HEK293 (cell line): ENCODE measurements at regions of chrX and their contacts with region 1.

Region 1: DNA sequence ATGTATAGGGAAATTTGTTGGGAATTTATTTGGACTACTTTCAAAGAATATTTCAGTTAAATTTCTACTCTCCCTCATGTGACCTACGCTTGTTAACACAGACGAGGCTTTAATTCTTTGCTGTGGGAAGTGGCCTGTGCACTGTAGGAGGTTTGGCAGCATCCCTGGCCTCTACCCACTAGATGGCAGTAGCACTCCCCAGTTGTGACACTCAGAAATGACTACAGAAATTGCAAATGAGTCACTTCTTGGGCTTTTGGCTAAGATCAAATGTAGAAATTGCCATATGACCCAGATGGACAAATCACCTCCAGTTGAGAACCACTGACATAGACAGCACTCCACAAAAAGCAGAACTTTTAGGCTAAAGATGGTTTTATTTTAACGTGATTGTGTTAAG is 22.1 kb downstream of the PIR start:
- H3K4me3 ChIP-seq: no peak overlapping the region
- H3K27ac ChIP-seq: no peak overlapping the region
- H3K4me1 ChIP-seq: no peaks in the 10 kb centered on the region
- CTCF ChIP-seq: no peak

Region 2: GRCh38 chrX:15299941-15300851 is 170.8 kb before region 1 on chrX:
- CTCF ChIA-PET with region 1: interaction called, 50 read pairs
- POLR2A ChIA-PET with region 1: no interaction called
- H3K4me3 ChIP-seq: no peak overlapping the region
- H3K27ac ChIP-seq: no peak overlapping the region
- H3K4me1 ChIP-seq: no peaks in the 10 kb centered on the region
- CTCF ChIP-seq: no peak

Region 3: GRCh38 chrX:15343075-15343476 is 127.9 kb before region 1 on chrX:
- CTCF ChIA-PET with region 1: interaction called, 165 read pairs
- POLR2A ChIA-PET with region 1: no interaction called
- H3K4me3 ChIP-seq: no peak overlapping the region
- H3K27ac ChIP-seq: no peak overlapping the region
- H3K4me1 ChIP-seq: no peaks in the 10 kb centered on the region
- CTCF ChIP-seq: no peak

Region 4: DNA sequence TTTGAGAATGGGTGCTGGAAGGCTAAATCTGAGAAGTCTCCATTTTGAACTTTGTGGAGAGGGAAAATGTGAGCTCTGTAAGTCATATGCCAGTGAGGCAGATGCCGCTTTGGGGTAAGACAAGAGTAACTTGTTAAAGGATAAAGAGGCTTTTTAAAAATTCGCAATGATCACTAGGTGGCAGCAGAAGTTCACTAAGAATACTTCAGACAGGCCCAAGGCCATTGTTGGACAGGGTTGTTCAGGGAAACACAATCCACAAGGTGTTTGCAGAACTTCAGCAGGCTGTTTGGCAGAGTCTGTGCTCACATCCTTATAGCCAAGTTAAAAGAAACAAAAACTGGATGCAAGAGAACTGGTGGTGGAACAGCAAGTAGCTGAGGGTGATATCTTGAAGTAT is 122.0 kb before region 1 on chrX:
- CTCF ChIA-PET with region 1: interaction called, 165 read pairs
- POLR2A ChIA-PET with region 1: no interaction called
- H3K4me3 ChIP-seq: no peak overlapping the region
- H3K27ac ChIP-seq: no peak overlapping the region
- H3K4me1 ChIP-seq: no peaks in the 10 kb centered on the region
- CTCF ChIP-seq: no peak; the same call in 1 of the 2 replicates

Region 5: DNA sequence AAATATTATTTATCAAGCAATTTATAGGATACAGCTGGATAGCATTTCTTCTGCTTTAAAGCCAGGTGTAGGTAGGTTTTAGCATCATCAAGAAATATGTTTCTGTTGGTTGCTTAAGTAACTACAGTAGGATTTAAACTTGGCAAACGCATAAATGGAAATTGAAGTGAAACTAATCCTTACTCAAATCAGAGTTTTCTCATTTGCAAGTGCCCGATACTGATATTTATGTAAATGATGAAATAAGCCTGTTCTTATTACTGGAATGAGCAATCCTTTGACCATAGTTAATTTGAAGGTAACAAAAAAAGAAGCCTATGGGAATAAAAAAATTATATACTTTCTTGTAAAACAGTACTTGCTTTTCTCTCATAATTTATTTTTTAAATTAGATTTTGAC is 112.5 kb before region 1 on chrX:
- CTCF ChIA-PET with region 1: interaction called, 165 read pairs
- POLR2A ChIA-PET with region 1: no interaction called
- H3K4me3 ChIP-seq: no peak overlapping the region
- H3K27ac ChIP-seq: no peak overlapping the region
- H3K4me1 ChIP-seq: no peaks in the 10 kb centered on the region
- CTCF ChIP-seq: no peak

Region 6: DNA sequence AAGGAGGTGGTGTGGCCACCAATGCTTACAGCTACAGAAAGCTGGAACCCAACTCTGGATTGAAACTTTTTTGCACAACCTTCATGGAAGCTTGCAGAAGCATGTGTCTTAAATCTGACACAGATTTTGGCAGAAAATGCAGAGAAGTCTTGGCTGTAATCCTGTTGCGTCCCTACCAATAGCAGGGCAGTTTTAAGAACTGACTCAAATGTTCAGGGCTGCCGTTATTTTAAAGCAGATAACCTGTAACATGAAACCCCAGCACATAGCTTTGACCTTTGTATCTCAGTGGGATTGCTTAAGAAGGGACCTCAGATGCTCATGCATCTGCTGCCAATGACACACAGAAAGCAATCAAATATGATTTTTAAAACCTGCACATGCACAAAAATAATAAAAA is 86.7 kb before region 1 on chrX and contains the start of gene VEGFD:
- CTCF ChIA-PET with region 1: interaction called, 33 read pairs
- POLR2A ChIA-PET with region 1: no interaction called
- H3K4me3 ChIP-seq: no peak within 1 kb of the TSS
- H3K27ac ChIP-seq: no peak within 1 kb of the TSS
- H3K4me1 ChIP-seq: no peaks in the 10 kb centered on the region; the same call in 1 of the 2 replicates
- CTCF ChIP-seq: no peak

Region 7: DNA sequence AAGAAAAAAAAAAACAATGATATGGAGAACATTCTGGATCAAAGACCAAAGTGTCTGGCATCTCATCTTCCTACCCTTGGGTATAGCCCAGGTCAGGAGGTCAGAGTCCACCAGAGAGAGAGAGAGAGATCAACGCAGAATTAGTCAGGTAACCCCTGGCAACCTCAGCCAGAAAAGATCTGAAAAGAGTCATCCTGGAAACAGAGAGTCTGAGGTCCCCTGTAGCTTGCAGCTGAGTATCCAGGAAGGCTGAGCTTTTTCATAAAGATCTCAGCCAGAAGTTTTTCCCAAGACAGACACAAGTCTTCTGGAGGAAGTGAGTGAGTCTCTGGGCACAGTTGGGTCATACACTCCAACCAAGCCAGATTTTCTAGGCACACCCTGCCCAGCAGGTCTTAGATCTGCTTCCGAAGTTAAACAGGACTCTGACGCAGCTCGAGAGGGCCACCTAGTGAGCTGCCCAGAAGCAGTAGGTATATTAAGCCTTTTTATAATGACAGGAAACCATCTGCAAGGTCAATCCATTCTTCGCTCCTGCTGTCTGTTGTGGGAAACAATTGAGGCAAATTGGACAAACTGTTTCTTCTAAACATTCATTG is 94.1 kb after region 1 on chrX:
- CTCF ChIA-PET with region 1: interaction called, 17 read pairs
- POLR2A ChIA-PET with region 1: no interaction called
- H3K4me3 ChIP-seq: no peak overlapping the region
- H3K27ac ChIP-seq: no peak overlapping the region
- H3K4me1 ChIP-seq: no peaks in the 10 kb centered on the region
- CTCF ChIP-seq: peak; percentile 31; the same call in 1 of the 2 replicates